H1 (cell line): ENCODE measurements at regions of chr18 and their contacts with region 1.

Region 1: GRCh38 chr18:57603871-57604270 is 17.4 kb upstream of the FECH start:
- DNase-seq: no peak
- H3K4me3 ChIP-seq: no peak overlapping the region
- H3K27ac ChIP-seq: no peak overlapping the region
- H3K4me1 ChIP-seq: no peaks in the 10 kb centered on the region
- H3K27me3 ChIP-seq: no peaks in the 10 kb centered on the region
- CTCF ChIP-seq: no peak
- EP300 ChIP-seq: no peak
- POLR2A ChIP-seq: no peak
- RAD21 ChIP-seq: no peak

Region 2: DNA sequence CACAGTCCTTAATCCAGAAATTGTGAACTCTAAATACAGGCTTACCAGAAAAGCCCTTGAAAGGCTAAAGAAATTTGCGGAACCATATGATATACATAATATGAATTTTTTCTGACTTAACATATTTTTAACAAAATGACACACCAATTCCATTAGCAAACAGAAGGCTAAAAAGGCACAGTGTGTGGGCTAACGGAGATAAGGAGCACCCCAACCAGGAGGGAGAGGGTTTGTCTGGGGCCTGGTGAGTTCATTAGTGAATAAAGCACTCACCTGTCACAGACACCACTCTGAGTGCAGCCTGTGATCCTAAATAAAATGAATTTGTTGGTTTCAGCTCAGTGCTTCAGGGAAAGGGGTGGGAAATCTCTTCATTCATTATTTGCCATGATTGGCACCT is 14.7 kb before region 1 on chr18:
- CTCF ChIA-PET with region 1: interaction called, 4 read pairs
- POLR2A ChIA-PET with region 1: interaction called, 19 read pairs
- DNase-seq: no peak
- H3K4me3 ChIP-seq: no peak overlapping the region
- H3K27ac ChIP-seq: no peak overlapping the region
- H3K4me1 ChIP-seq: peaks cover 0 to 6% (median 4%) of the 10 kb centered on the region in 4 experiments; a peak in 5 of 7 replicates
- H3K27me3 ChIP-seq: no peaks in the 10 kb centered on the region
- CTCF ChIP-seq: no peak
- EP300 ChIP-seq: no peak
- POLR2A ChIP-seq: no peak
- RAD21 ChIP-seq: no peak

Region 3: GRCh38 chr18:57621246-57621604 is 17.4 kb after region 1 on chr18:
- CTCF ChIA-PET with region 1: no interaction called
- POLR2A ChIA-PET with region 1: interaction called, 20 read pairs
- DNase-seq: no peak
- H3K4me3 ChIP-seq: peak overlapping the region; percentile 67 to 97 (median 81)
- H3K27ac ChIP-seq: peak overlapping the region; percentile 96
- H3K4me1 ChIP-seq: peaks cover 0 to 6% (median 2%) of the 10 kb centered on the region in 4 experiments; a peak in 3 of 7 replicates
- H3K27me3 ChIP-seq: no peaks in the 10 kb centered on the region
- CTCF ChIP-seq: no peak
- EP300 ChIP-seq: no peak
- POLR2A ChIP-seq: no peak
- RAD21 ChIP-seq: no peak

Region 4: DNA sequence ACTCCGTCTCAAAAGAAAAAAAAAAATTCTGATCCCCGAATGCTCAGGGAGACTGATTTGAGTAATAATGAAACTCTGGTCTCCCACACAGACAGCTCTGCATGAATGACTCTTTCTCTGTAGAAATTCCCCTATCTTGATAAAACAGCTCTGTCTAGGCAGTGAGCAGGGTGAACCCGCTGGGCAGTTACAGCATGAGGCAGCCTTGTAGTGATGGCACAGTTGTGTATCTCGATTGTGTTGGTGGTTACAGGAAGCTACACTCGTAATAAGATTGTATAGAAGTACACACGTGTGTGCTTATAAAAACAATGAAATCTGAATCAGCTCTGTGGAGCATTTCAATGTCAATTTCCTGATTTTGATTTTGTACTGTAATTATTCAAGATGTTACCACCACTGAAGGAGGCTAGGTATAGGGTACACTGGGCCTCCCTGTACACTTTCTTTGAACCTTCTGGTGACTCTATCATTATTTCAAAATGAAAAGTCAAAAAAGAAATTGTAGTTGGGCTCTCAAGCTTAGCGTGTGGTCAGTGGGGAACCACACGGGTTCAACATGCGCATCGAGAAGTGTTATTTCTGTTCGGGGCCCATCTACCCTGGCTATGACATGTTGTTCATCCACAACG is 234.2 kb after region 1 on chr18:
- CTCF ChIA-PET with region 1: no interaction called
- POLR2A ChIA-PET with region 1: no interaction called
- DNase-seq: no peak
- H3K4me3 ChIP-seq: no peak overlapping the region
- H3K27ac ChIP-seq: no peak overlapping the region
- H3K4me1 ChIP-seq: no peaks in the 10 kb centered on the region
- H3K27me3 ChIP-seq: no peaks in the 10 kb centered on the region
- CTCF ChIP-seq: no peak
- EP300 ChIP-seq: no peak
- POLR2A ChIP-seq: no peak
- RAD21 ChIP-seq: no peak